ENCODE measurements at regions of chr3 and their contacts with region 1.

Region 1: DNA sequence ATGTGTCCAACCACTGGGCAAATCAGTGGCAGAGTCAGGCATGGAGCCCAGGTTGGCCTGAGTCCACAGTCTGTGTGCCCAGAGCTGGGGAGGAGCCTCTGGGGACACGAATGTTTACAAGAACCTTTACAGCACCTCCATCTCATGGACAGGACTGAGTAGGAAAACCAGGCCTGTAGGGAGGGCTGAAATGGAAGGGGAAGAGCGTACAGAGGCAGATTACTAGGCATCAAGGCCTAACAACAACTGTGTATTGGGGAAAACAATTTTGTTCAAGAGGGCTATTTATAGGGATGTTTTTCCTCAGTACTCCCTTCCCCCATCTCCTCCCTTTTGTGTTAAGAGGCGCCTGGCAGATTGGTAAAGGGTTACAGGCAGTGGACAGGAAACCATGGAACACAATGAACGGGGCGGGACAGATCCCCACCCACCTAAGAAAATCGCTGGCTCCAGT is 15.1 kb upstream of the ARHGAP31 start:
- DNase-seq: no peak
- H3K4me3 ChIP-seq: no peak overlapping the region
- CTCF ChIP-seq: no peak

Region 2: GRCh38 chr3:119219069-119219468 is 60.1 kb before region 1 on chr3:
- CTCF ChIA-PET with region 1: no interaction called
- POLR2A ChIA-PET with region 1: no interaction called
- DNase-seq: no peak
- H3K4me3 ChIP-seq: no peak overlapping the region
- CTCF ChIP-seq: no peak

Region 3: GRCh38 chr3:119257682-119258410 is 21.3 kb before region 1 on chr3:
- CTCF ChIA-PET with region 1: interaction called, 17 read pairs
- POLR2A ChIA-PET with region 1: no interaction called
- DNase-seq: no peak
- H3K4me3 ChIP-seq: no peak overlapping the region
- CTCF ChIP-seq: no peak

Region 4: GRCh38 chr3:119293871-119294695 is 15.0 kb after region 1 on chr3 and contains the start of gene ARHGAP31:
- CTCF ChIA-PET with region 1: interaction called, 10 read pairs
- POLR2A ChIA-PET with region 1: no interaction called
- DNase-seq: no peak
- H3K4me3 ChIP-seq: peak within 1 kb of the TSS; percentile 89
- CTCF ChIP-seq: no peak

Region 5: DNA sequence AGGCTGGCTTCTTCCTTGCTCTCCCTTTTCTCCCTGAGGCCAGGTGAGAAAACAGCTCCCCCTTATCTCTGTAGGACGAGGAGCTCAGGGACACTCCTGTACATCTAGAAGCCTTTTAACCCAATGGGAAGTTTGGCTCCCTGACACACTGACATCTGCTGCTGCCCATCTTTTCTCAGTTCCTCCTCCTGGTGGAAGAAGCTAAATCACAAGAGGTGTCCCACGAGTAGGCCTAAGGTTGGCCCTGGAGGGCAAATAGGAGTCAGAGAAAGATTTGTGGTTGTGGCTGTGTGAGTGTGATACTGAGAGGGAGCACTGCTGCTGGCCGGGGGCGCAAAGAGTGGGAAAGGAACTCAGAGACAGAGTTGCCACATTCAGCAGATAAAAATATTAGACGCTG is 64.6 kb after region 1 on chr3:
- CTCF ChIA-PET with region 1: interaction called, 18 read pairs
- POLR2A ChIA-PET with region 1: no interaction called
- DNase-seq: no peak
- H3K4me3 ChIP-seq: no peak overlapping the region
- CTCF ChIP-seq: no peak

Region 6: DNA sequence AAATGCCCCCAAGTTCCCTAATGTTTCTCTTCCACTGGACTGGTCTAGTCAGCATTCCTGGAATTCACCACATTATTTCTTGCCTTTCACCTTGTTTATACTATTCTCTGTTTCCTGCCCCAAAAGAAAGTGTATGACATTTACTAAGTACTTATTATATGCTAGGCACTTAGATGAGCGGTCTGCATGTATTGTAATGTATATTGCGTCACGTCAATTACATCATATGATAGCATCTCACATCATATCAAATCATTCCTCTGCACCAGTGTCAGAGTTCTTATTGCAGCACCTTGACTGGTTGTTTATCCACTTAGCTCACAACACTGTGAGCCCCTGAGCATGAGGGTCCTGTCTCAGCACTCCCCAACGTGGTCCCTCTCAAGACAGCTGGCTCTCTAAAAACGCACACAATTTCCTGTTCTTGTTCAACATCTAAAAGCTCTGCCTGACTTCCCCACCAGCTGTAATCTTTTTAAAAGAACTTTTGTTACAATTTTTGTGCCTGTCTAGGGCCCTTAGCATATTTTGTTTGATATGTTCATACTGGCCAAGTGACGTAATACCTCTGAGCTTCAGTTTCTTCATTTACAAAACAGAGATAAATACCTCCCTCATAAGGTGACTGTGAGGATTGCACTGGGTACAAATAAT is 73.8 kb after region 1 on chr3:
- CTCF ChIA-PET with region 1: interaction called, 53 read pairs
- POLR2A ChIA-PET with region 1: no interaction called
- DNase-seq: peak; percentile 52
- H3K4me3 ChIP-seq: no peak overlapping the region
- CTCF ChIP-seq: peak; percentile 26